Activated CD4-positive, alpha-beta memory T cell treated with anti-CD3 and anti-CD28 coated beads for 36 hours (primary cell): ENCODE measurements at regions of chrX and their contacts with region 1.

Region 1: DNA sequence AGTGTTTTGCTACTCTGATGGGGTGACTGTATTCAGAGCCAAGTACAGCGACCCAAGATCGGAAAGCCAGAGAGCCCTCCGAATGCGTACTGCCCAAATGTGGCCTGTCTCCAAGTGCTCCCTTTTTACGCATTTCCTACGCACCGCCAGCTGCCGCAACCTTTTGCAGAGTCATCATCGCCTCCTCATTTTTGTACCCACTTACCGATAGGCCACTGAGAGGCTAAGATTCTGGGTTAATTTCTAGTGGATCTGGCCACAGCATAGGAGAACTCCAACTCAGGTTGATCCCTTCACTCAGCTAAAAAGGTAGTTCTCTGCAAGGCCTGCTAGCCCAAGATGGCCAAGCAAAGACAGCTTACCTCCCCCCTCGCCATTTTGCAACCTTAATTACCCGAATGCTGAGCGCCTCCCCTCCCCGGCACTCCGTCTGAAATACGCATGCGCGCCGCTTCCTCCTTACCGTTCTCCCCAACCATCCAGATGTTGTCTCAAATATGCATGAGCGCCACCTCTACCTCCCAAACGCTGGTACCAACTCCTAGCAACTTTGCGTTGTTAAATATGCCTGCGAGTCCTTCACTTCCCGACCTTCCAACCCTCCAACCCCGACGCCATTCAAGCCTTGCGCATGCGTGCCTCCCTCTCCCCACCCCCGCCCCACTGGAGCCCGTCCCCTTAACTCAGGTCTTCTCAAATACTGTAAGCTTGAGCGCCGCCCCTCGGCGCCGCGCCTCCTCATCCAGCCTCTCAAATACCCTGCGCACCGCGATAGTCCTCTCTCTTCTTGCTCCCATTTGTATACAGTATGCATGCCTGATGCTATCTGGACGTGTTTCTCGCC is 11.8 kb upstream of the ZCCHC13 start:
- DNase-seq: peak; percentile 88
- H3K4me3 Mint-ChIP-seq: peak overlapping the region; percentile 96
- H3K27ac Mint-ChIP-seq: peak overlapping the region; percentile 99
- H3K4me1 Mint-ChIP-seq: peaks cover 21% of the 10 kb centered on the region
- H3K27me3 Mint-ChIP-seq: no peaks in the 10 kb centered on the region

Region 2: GRCh38 chrX:73562984-73563737 is 729.0 kb before region 1 on chrX and contains the start of gene CHIC1:
- CTCF ChIA-PET with region 1: no interaction called
- POLR2A ChIA-PET with region 1: no interaction called
- intact Hi-C with region 1: loop called (anchors 2 kb)
- DNase-seq: peak; percentile 78
- H3K4me3 Mint-ChIP-seq: peak within 1 kb of the TSS; percentile 90
- H3K27ac Mint-ChIP-seq: peak within 1 kb of the TSS; percentile 94
- H3K4me1 Mint-ChIP-seq: peaks cover 15% of the 10 kb centered on the region
- H3K27me3 Mint-ChIP-seq: no peaks in the 10 kb centered on the region
- total RNA-seq, gene CHIC1: 3.6 to 3.8 TPM

Region 3: GRCh38 chrX:74218895-74219294 is 73.3 kb before region 1 on chrX:
- CTCF ChIA-PET with region 1: no interaction called
- POLR2A ChIA-PET with region 1: no interaction called
- intact Hi-C with region 1: loop called (anchors 2 kb)
- DNase-seq: no peak
- H3K4me3 Mint-ChIP-seq: no peak overlapping the region
- H3K27ac Mint-ChIP-seq: no peak overlapping the region
- H3K4me1 Mint-ChIP-seq: peaks cover 32% of the 10 kb centered on the region
- H3K27me3 Mint-ChIP-seq: no peaks in the 10 kb centered on the region

Region 4: DNA sequence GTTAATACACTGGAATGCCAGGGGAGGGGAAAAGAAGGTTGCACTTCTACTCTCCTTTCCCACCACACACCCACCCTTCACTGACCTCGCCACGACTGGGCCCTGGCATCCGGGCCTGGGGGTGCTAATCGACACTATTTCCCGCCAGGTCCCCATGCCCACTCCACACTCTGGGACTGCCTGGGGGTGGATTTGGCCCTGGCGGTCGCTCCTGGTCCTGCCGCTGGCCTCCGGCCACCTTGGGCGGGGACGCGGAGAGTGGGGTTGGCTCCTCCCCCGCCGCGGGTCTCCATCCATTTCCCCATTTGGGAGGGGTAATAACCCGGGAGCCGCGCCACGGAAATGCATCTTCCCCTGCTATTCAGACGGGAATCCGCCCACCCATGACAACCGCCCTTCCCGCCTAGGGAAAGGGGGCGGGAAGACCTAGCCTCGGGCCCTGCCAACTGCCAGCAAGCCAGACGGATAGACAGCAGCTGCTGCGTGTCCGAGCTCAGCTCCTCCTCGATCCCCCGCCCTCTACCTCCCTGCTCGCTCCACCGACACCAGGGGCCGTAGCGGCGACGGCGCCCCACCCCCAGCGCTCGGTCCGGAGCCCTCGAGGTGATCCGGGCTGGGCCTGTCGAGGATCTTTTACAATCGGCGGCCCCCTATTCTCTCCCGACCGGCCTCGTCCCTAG is 244.1 kb after region 1 on chrX:
- CTCF ChIA-PET with region 1: no interaction called
- POLR2A ChIA-PET with region 1: interaction called, 4 read pairs
- intact Hi-C with region 1: loop called (anchors 2 kb)
- DNase-seq: peak; percentile 58
- H3K4me3 Mint-ChIP-seq: peak overlapping the region; percentile 66
- H3K27ac Mint-ChIP-seq: peak overlapping the region; percentile 84
- H3K4me1 Mint-ChIP-seq: peaks cover 35% of the 10 kb centered on the region
- H3K27me3 Mint-ChIP-seq: no peaks in the 10 kb centered on the region

Region 5: DNA sequence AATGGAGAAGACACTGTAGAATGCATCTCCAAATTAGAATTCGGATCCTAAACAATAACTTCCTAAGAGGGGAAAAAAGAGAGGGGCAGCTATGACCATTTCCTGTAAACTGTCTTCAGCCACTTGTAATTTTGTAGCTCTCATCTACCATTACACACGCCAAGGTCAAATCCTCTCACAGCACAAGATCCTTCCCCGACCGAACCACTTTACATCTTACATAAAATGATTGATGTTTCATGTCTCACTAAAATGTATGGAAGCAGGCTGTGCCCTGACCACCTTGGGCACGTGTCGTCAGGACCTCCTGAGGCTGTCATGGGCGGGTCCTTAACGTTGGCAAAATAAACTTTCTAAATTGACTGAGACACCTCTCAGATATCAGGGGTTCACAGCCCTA is 1856.6 kb after region 1 on chrX:
- CTCF ChIA-PET with region 1: interaction called, 3 read pairs
- POLR2A ChIA-PET with region 1: no interaction called
- intact Hi-C with region 1: loop called (anchors 10 kb)
- DNase-seq: peak; percentile 57
- H3K4me3 Mint-ChIP-seq: peak overlapping the region; percentile 74
- H3K27ac Mint-ChIP-seq: peak overlapping the region; percentile 99
- H3K4me1 Mint-ChIP-seq: peaks cover 11% of the 10 kb centered on the region
- H3K27me3 Mint-ChIP-seq: no peaks in the 10 kb centered on the region